ENCODE measurements at regions of chr1 and their contacts with region 1.

Region 1: GRCh38 chr1:65209005-65209885 is 61.2 kb downstream of the AK4 start:
- DNase-seq: peak; percentile 37
- ATAC-seq: peak; percentile 34
- H3K4me3 Mint-ChIP-seq: no peak overlapping the region
- H3K27ac Mint-ChIP-seq: no peak overlapping the region
- H3K4me1 Mint-ChIP-seq: peaks cover 28% of the 10 kb centered on the region
- H3K27me3 Mint-ChIP-seq: no peaks in the 10 kb centered on the region

Region 2: DNA sequence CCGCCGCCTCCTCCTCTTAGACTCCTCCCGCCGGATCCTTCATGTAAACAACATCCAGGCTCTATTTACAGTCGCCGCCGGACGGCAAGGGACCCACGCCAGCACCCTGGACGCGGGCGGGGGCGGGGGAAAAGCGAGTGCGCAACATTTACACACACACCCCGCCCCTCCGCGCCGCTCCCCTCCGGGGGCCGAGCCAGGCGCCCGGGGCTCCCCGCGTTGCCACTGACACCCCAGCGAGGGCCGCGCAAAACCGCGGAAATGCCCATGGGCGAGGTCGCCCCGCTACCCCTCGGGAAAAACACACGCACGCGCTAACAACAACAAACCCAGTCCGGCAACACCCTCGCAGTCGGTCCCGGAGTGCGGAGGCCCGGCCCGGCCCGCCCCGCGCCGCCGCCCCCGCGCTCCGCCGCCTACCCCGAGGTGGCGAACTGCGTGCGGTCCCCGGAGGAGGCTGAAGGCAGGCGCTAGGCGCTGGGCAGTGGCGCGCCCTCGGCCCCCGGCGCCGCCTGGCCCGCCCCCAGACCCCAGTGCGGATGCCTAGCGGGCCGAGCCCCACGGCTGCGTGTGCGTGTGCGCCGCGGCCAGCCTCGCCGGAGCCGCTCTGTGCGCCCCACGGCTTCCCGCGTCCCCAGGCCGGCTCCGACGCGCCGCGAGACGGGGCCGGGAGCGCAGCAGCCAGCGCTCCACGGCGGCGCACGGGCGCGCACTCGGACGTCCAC is 142.3 kb before region 1 on chr1:
- CTCF ChIA-PET with region 1: interaction called, 47 read pairs
- POLR2A ChIA-PET with region 1: no interaction called
- DNase-seq: peak; percentile 70
- ATAC-seq: peak; percentile 70
- H3K4me3 Mint-ChIP-seq: peak overlapping the region; percentile 89
- H3K27ac Mint-ChIP-seq: peak overlapping the region; percentile 72
- H3K4me1 Mint-ChIP-seq: peaks cover 34% of the 10 kb centered on the region
- H3K27me3 Mint-ChIP-seq: no peaks in the 10 kb centered on the region

Region 3: DNA sequence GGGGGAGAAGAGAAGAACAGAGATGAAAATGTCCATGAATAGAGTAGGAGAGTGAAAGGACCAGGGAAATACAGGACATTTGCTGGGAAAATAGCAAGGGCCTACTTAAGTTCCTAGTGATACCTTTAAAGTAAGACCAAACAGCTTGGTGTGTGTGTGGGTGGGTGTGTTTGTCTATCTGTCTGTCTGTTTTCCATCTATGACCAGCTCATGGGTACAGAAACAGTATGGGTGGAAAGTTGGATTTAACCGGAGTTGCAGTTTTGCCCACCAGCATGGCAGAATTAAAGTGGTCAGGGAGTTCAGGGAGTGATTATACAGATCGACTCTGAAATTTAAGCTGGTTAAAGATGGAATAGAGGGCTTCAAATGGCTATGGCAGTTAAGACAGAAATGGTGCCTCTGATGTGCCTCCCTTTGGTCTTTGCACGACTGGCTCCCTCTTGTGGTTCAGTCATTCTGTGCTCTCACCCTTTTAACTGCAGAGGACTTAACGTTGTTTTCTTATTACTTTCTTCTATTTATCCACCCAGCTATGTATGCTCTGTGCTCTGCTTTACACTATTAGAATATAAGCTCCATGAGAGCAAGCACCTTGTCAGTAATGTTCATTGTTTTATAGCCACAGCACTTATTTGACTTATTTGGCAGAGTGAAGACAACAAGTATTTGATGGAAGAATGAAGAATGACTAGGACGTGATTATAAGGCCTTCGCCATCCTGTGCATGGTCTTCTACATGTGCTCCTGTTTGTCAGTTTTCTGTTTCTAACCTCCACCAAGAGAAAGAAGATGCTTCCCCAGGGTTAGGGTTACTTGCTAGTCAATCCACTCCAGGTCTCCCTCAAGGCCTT is 133.9 kb before region 1 on chr1:
- CTCF ChIA-PET with region 1: interaction called, 10 read pairs
- POLR2A ChIA-PET with region 1: no interaction called
- DNase-seq: peak; percentile 80
- ATAC-seq: peak; percentile 97
- H3K4me3 Mint-ChIP-seq: no peak overlapping the region
- H3K27ac Mint-ChIP-seq: no peak overlapping the region
- H3K4me1 Mint-ChIP-seq: peaks cover 3% of the 10 kb centered on the region
- H3K27me3 Mint-ChIP-seq: peaks cover 7% of the 10 kb centered on the region

Region 4: DNA sequence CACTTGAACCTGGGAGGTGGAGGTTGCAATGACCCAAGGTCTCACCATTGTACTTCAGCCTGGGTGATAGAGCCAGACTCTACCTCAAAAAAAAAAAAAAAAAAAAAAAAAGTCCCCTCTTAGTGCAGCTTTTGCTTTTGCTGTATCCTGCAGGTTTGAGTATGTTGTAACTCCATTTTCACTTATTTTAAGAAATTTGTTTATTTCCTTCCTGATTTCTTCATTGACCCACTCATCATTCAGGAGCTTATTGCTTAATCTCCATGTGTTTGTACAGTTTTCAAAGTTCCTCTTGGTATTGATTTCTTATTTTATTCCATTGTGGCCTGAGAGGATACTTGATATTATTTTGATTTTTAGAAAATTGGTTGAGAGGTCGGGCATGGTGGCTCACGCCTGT is 112.2 kb before region 1 on chr1:
- CTCF ChIA-PET with region 1: no interaction called
- POLR2A ChIA-PET with region 1: no interaction called
- DNase-seq: no peak
- ATAC-seq: no peak
- H3K4me3 Mint-ChIP-seq: no peak overlapping the region
- H3K27ac Mint-ChIP-seq: no peak overlapping the region
- H3K4me1 Mint-ChIP-seq: no peaks in the 10 kb centered on the region
- H3K27me3 Mint-ChIP-seq: peaks cover 12% of the 10 kb centered on the region

Region 5: DNA sequence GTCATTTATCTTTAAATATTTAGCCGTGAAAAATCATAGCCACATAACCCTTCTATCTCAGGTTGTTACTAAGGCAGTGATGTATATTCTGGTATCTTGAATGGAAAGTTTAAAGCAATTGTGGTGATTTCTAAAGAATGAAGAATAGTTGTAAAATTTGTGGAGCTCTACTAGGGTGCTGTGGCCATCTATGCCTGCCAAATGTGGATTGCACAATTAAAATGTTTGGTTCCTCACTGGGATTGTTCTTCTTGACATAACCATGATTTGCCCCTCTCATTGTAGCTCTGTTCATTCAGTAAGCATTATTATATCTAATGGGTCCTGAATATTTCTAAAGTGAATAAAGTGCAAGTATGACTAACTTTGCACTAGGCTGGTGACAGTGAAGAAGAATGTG is 11.1 kb before region 1 on chr1:
- CTCF ChIA-PET with region 1: interaction called, 13 read pairs
- POLR2A ChIA-PET with region 1: no interaction called
- DNase-seq: no peak
- ATAC-seq: no peak
- H3K4me3 Mint-ChIP-seq: no peak overlapping the region
- H3K27ac Mint-ChIP-seq: no peak overlapping the region
- H3K4me1 Mint-ChIP-seq: peaks cover 13% of the 10 kb centered on the region
- H3K27me3 Mint-ChIP-seq: no peaks in the 10 kb centered on the region

Region 6: DNA sequence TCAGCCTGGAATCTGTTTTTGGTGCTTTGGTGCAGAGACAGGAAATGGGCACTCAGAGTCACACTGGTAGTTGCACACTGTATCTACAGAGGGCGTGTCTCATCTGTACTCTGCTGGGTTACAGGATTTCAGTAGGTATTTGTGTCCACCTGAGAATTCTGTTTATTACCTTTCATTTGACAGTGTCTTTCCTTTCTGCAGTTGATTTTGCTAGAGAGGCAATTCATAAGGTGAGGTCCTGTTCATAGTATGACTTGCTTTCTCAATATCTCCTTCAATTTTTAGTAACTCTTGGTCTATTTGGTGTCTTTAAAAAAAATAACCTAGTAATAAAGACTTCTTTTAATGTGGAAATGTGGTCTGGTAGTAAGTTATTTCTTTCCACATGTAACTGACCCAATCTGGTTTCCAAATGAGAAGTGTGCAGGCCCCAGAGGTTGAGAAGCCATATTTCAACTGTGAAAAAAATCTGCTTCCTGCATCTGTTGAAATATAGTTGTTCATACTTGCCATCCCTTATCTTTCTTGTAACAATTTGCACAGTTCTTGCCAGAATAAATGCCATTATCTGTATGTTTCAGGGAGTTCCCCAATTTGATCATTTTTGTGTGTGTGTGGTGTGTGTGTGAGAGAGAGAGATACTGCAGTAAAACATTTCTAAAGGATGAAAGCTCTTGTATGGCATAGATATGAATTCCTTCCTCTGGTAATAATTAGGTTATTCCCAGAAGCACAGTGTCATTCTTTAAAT is 21.7 kb after region 1 on chr1:
- CTCF ChIA-PET with region 1: interaction called, 12 read pairs
- POLR2A ChIA-PET with region 1: no interaction called
- DNase-seq: no peak
- ATAC-seq: no peak
- H3K4me3 Mint-ChIP-seq: no peak overlapping the region
- H3K27ac Mint-ChIP-seq: peak overlapping the region; percentile 44
- H3K4me1 Mint-ChIP-seq: peaks cover 22% of the 10 kb centered on the region
- H3K27me3 Mint-ChIP-seq: no peaks in the 10 kb centered on the region

Region 7: GRCh38 chr1:65235867-65236805 is 26.9 kb after region 1 on chr1:
- CTCF ChIA-PET with region 1: interaction called, 12 read pairs
- POLR2A ChIA-PET with region 1: no interaction called
- DNase-seq: no peak
- ATAC-seq: no peak
- H3K4me3 Mint-ChIP-seq: no peak overlapping the region
- H3K27ac Mint-ChIP-seq: no peak overlapping the region
- H3K4me1 Mint-ChIP-seq: peaks cover 5% of the 10 kb centered on the region
- H3K27me3 Mint-ChIP-seq: peaks cover 16% of the 10 kb centered on the region

Region 8: DNA sequence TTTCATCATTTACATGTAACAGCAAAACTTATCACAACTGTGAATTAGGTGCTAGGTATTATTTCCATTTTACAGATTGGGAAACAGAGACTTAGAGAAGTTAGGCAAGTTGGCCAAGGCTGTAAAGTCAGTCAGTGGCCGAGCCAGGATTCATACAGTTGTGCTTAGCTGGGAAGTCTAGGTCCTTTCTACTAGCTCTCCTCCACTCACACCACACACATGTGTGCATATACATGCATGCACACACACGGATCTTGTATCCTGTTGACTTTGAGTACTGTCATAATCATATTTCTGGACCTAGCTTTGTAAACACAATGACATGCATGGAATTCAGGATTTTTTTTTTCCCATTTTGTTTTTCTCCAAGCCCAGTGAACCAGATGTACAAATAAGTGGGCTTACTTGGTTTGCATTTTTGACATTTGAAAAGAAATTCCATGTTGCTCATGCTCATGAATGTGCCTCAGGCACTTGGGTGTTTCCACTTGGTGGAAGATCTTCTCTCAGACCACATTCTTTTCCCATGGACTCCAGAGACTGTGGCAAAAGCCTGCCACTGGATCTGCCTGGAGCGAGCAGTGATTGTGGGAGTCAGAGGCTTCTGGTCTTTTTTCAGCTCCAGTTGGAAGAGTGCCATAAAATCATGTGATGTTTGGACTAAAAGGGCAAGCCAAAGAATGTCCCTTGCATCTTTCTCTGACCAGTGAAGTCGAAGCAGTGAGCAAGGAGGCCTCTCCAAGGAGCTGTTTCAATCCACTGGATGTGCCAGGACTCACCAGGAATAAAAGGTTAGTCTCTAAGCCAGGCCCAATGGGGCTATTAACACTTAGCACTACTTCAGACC is 38.5 kb after region 1 on chr1:
- CTCF ChIA-PET with region 1: no interaction called
- POLR2A ChIA-PET with region 1: no interaction called
- DNase-seq: no peak
- ATAC-seq: no peak
- H3K4me3 Mint-ChIP-seq: no peak overlapping the region
- H3K27ac Mint-ChIP-seq: no peak overlapping the region
- H3K4me1 Mint-ChIP-seq: no peaks in the 10 kb centered on the region
- H3K27me3 Mint-ChIP-seq: peaks cover 27% of the 10 kb centered on the region

Region 9: GRCh38 chr1:65558215-65558614 is 349.0 kb after region 1 on chr1:
- CTCF ChIA-PET with region 1: no interaction called
- POLR2A ChIA-PET with region 1: no interaction called
- DNase-seq: no peak
- ATAC-seq: no peak
- H3K4me3 Mint-ChIP-seq: no peak overlapping the region
- H3K27ac Mint-ChIP-seq: no peak overlapping the region
- H3K4me1 Mint-ChIP-seq: no peaks in the 10 kb centered on the region
- H3K27me3 Mint-ChIP-seq: no peaks in the 10 kb centered on the region

Measured in activated CD8-positive, alpha-beta T cell treated with anti-CD3 and anti-CD28 coated beads, Interleukin-2, amount 10 ng/mL, durations not matched to agents 7 days and 5 days (primary cell).